B cell (primary cell): ENCODE measurements at regions of chr4 and their contacts with region 1.

Region 1: GRCh38 chr4:445410-445809 is 53.5 kb downstream of the ZNF721 start:
- DNase-seq: no peak
- ATAC-seq: no peak
- H3K4me3 ChIP-seq: no peak overlapping the region
- H3K4me3 Mint-ChIP-seq: no peak overlapping the region
- H3K27ac ChIP-seq: no peak overlapping the region
- H3K27ac Mint-ChIP-seq: no peak overlapping the region
- H3K4me1 ChIP-seq: no peaks in the 10 kb centered on the region
- H3K4me1 Mint-ChIP-seq: no peaks in the 10 kb centered on the region
- H3K27me3 ChIP-seq: no peaks in the 10 kb centered on the region
- H3K27me3 Mint-ChIP-seq: no peaks in the 10 kb centered on the region
- CTCF ChIP-seq: no peak

Region 2: DNA sequence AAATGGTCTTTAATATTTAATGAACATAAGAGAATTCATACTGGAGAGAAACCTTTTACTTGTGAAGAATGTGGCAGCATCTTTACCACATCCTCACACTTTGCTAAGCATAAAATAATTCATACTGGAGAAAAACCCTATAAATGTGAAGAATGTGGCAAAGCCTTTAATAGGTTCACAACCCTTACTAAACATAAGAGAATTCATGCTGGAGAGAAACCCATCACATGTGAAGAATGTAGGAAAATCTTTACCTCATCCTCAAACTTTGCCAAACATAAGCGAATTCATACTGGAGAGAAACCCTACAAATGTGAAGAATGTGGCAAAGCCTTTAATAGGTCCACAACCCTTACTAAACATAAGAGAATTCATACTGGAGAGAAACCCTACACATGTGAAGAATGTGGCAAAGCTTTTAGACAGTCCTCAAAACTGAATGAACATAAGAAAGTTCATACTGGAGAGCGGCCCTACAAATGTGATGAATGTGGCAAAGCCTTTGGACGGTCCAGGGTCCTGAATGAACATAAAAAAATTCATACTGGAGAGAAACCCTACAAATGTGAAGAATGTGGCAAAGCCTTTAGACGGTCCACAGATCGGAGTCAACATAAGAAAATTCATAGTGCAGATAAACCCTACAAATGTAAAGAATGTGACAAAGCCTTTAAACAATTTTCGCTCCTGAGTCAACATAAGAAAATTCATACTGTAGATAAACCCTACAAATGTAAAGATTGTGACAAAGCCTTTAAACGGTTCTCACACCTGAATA is 72.2 kb before region 1 on chr4:
- CTCF ChIA-PET with region 1: no interaction called
- POLR2A ChIA-PET with region 1: no interaction called
- intact Hi-C with region 1: loop called (anchors 10 kb)
- DNase-seq: no peak
- ATAC-seq: no peak
- H3K4me3 ChIP-seq: peak overlapping the region in 1 of 5 experiments; percentile 5
- H3K4me3 Mint-ChIP-seq: no peak overlapping the region
- H3K27ac ChIP-seq: no peak overlapping the region
- H3K27ac Mint-ChIP-seq: no peak overlapping the region
- H3K4me1 ChIP-seq: no peaks in the 10 kb centered on the region
- H3K4me1 Mint-ChIP-seq: no peaks in the 10 kb centered on the region
- H3K27me3 ChIP-seq: no peaks in the 10 kb centered on the region
- H3K27me3 Mint-ChIP-seq: no peaks in the 10 kb centered on the region
- CTCF ChIP-seq: no peak